Prostate gland (tissue), 2 donors: ENCODE measurements at regions of chr4 and their contacts with region 1.

Region 1: GRCh38 chr4:674172-675035 is at the starts of genes ATP5ME and MYL5:
- DNase-seq: peak; percentile 95
- H3K4me3 ChIP-seq: peak within 1 kb of the TSS; percentile 86 to 99
- H3K27ac ChIP-seq: peak within 1 kb of the TSS; percentile 94 to 98
- H3K4me1 ChIP-seq: peaks cover 20% of the 10 kb centered on the region
- H3K27me3 ChIP-seq: no peaks in the 10 kb centered on the region
- CTCF ChIP-seq: peak; percentile 95 to 100 (median 98)
- POLR2A ChIP-seq: peak; percentile 92
- total RNA-seq, gene ATP5ME: 148 to 313 TPM
- total RNA-seq, gene MYL5: 14.6 to 25.7 TPM

Region 2: DNA sequence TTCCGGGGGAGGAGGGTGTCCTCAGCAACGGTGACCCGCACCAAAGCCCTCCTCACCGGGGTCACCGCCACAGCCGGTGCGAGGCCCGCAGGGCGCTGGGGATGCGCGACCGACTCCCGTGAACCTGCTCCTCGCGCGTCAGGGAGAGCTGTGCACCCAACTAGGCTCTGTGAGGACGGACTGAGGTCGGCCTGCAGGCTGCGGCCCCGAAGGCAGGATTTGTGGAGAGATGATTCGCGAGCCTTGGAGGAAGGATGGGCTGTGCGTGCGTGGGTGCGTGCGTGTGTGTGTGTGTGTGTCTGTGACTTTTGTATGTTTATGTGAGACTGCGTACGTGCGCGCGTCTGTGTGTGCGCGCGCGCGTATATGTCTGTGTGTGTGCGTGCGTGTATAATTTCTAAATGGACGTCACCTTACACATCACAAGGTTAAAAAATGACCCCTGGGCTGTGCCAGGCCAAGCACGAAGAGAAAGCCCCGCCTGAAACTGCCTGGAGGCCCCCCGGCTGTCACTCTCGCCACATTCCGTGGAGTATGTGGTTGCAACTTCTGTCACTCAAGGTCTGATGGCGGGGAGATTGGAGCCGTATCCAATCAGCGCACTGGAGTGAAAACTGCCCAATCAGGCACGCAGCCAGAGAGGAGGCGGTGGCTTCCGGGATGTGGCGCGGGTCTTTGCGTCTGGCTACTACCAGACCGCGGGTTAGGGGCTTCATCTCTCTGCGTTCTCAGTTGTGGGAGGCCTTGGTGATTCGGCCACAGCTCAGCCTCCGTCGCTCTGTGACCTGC is 337.1 kb before region 1 on chr4 and contains the start of gene ZNF141:
- intact Hi-C with region 1: loop called (anchors 10 kb)
- DNase-seq: peak; percentile 98
- H3K4me3 ChIP-seq: peak within 1 kb of the TSS; percentile 82 to 83
- H3K27ac ChIP-seq: peak within 1 kb of the TSS; percentile 89 to 91
- H3K4me1 ChIP-seq: no peaks in the 10 kb centered on the region
- H3K27me3 ChIP-seq: no peaks in the 10 kb centered on the region
- CTCF ChIP-seq: peak in 1 of 4 experiments; percentile 4
- POLR2A ChIP-seq: peak; percentile 57
- total RNA-seq, gene ZNF141: 17.2 to 32.2 TPM

Region 3: GRCh38 chr4:492412-492811 is 182.0 kb before region 1 on chr4:
- intact Hi-C with region 1: no loop called
- DNase-seq: no peak
- H3K4me3 ChIP-seq: no peak overlapping the region
- H3K27ac ChIP-seq: no peak overlapping the region
- H3K4me1 ChIP-seq: no peaks in the 10 kb centered on the region
- H3K27me3 ChIP-seq: no peaks in the 10 kb centered on the region
- CTCF ChIP-seq: no peak
- POLR2A ChIP-seq: no peak

Region 4: GRCh38 chr4:508675-509638 is 165.4 kb before region 1 on chr4:
- intact Hi-C with region 1: loop called (anchors 10 kb)
- DNase-seq: no peak
- H3K4me3 ChIP-seq: no peak overlapping the region
- H3K27ac ChIP-seq: no peak overlapping the region
- H3K4me1 ChIP-seq: no peaks in the 10 kb centered on the region
- H3K27me3 ChIP-seq: no peaks in the 10 kb centered on the region
- CTCF ChIP-seq: no peak
- POLR2A ChIP-seq: no peak

Region 5: GRCh38 chr4:781493-782216 is 107.3 kb after region 1 on chr4:
- intact Hi-C with region 1: loop called (anchors 5 kb)
- DNase-seq: peak; percentile 98
- H3K4me3 ChIP-seq: peak overlapping the region; percentile 94 to 98
- H3K27ac ChIP-seq: peak overlapping the region; percentile 91 to 96
- H3K4me1 ChIP-seq: peaks cover 20% of the 10 kb centered on the region
- H3K27me3 ChIP-seq: no peaks in the 10 kb centered on the region
- CTCF ChIP-seq: no peak
- POLR2A ChIP-seq: peak; percentile 95